ENCODE measurements at regions of chr1 and their contacts with region 1.

Region 1: DNA sequence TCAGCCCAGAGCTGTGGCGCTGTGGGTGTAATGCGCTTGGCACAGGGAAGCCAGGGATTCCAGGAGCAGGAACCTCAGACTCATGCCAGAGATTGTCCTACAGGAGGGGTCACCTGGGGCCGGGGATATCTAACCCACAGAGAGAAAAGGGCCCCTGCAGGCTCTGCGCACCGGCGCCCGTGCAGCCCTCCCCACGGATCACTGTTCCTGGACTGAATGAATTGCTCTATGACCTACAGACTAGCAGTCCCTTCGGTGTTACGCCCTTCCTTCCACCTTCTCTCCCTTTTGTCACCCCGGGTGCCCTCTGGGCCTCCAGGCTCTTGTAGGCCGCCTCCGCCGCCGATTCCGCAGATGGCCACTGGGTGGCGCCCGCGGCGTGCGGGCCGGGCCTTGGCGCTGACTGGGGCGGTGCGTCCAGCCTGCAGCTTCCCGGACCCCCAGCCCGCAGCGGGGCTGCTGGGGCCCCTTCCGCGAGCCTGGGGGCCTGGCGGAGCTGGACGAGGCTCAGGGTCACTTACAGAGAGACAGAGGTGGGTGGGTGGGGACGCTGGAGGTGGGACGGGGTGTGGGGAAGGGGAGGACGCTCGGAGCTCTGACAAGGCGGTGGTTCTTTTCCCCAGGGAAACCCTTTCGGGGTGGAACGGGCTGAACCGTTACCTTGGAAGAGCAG is 101.3 kb downstream of the IER5 start:
- DNase-seq: peak; percentile 76
- H3K4me3 Mint-ChIP-seq: no peak overlapping the region
- H3K27ac Mint-ChIP-seq: no peak overlapping the region
- H3K4me1 Mint-ChIP-seq: peaks cover 2% of the 10 kb centered on the region
- H3K27me3 Mint-ChIP-seq: peaks cover 61% of the 10 kb centered on the region

Region 2: GRCh38 chr1:181424786-181425403 is 235.1 kb after region 1 on chr1:
- CTCF ChIA-PET with region 1: interaction called, 107 read pairs
- DNase-seq: peak; percentile 87
- H3K4me3 Mint-ChIP-seq: peak overlapping the region; percentile 35
- H3K27ac Mint-ChIP-seq: no peak overlapping the region
- H3K4me1 Mint-ChIP-seq: peaks cover 10% of the 10 kb centered on the region
- H3K27me3 Mint-ChIP-seq: peaks cover 42% of the 10 kb centered on the region

Region 3: GRCh38 chr1:181430015-181430885 is 240.4 kb after region 1 on chr1:
- CTCF ChIA-PET with region 1: interaction called, 107 read pairs
- DNase-seq: no peak
- H3K4me3 Mint-ChIP-seq: no peak overlapping the region
- H3K27ac Mint-ChIP-seq: no peak overlapping the region
- H3K4me1 Mint-ChIP-seq: no peaks in the 10 kb centered on the region
- H3K27me3 Mint-ChIP-seq: peaks cover 45% of the 10 kb centered on the region

Measured in activated naive CD4-positive, alpha-beta T cell treated with anti-CD3 and anti-CD28 coated beads, Interleukin-2, amount 10 ng/mL, durations not matched to agents 7 days and 5 days (primary cell).